K562 (cell line): ENCODE measurements at regions of chr5 and their contacts with region 1.

Region 1: GRCh38 chr5:170747851-170748250 is 35.7 kb upstream of the GABRP start:
- DNase-seq: peak; percentile 23 to 39 (median 32)
- ATAC-seq: peak; percentile 67
- H3K4me3 ChIP-seq: no peak overlapping the region
- H3K27ac ChIP-seq: no peak overlapping the region
- H3K4me1 ChIP-seq: peaks cover 0 to 9% of the 10 kb centered on the region in 2 experiments; a peak in 2 of 5 replicates
- H3K27me3 ChIP-seq: peaks cover 2 to 23% of the 10 kb centered on the region in 2 experiments; a peak in 3 of 5 replicates
- CTCF ChIP-seq: peak; percentile 34 to 57 (median 49)
- EP300 ChIP-seq: no peak
- POLR2A ChIP-seq: no peak
- RAD21 ChIP-seq: 0 out of 4 replicates have a peak, but pooled peaks of 1 of the 2 experiments have one; percentile 19

Region 2: GRCh38 chr5:170701334-170701733 is 46.5 kb before region 1 on chr5:
- CTCF ChIA-PET with region 1: no interaction called
- POLR2A ChIA-PET with region 1: no interaction called
- in situ Hi-C with region 1: no loop called
- intact Hi-C with region 1: no loop called
- DNase-seq: no peak
- ATAC-seq: no peak
- H3K4me3 ChIP-seq: no peak overlapping the region
- H3K27ac ChIP-seq: no peak overlapping the region
- H3K4me1 ChIP-seq: no peaks in the 10 kb centered on the region
- H3K27me3 ChIP-seq: no peaks in the 10 kb centered on the region
- CTCF ChIP-seq: no peak
- EP300 ChIP-seq: no peak
- POLR2A ChIP-seq: no peak
- RAD21 ChIP-seq: no peak

Region 3: DNA sequence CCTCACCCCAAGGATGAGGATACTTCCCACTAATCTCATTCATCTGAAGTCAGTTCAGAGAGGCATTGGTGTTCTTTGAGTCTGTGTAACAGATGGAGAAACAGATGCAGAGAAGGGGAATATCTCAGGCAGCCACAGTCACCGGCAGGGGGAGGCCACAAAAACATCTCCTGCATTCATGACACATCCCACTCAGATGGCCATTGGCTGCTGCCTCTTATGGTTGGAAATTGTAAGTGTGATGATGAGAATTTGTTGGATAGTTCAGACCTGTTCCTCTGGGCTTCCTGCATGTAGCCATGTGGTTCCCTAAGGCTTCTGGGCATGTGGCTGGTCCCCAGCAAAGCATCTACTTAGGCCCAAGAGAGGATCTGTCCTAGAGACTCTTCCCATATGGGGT is 10.3 kb before region 1 on chr5:
- CTCF ChIA-PET with region 1: no interaction called
- POLR2A ChIA-PET with region 1: no interaction called
- in situ Hi-C with region 1: no loop called
- intact Hi-C with region 1: no loop called
- DNase-seq: no peak
- ATAC-seq: no peak
- H3K4me3 ChIP-seq: no peak overlapping the region
- H3K27ac ChIP-seq: no peak overlapping the region
- H3K4me1 ChIP-seq: no peaks in the 10 kb centered on the region
- H3K27me3 ChIP-seq: no peaks in the 10 kb centered on the region
- CTCF ChIP-seq: no peak
- EP300 ChIP-seq: no peak
- POLR2A ChIP-seq: no peak
- RAD21 ChIP-seq: no peak

Region 4: GRCh38 chr5:170791325-170791954 is 43.6 kb after region 1 on chr5:
- CTCF ChIA-PET with region 1: no interaction called
- POLR2A ChIA-PET with region 1: no interaction called
- in situ Hi-C with region 1: no loop called
- intact Hi-C with region 1: loop called (anchors 1 kb)
- DNase-seq: peak; percentile 21 to 30 (median 26)
- ATAC-seq: peak; percentile 69; the same call in 2 of the 3 replicates
- H3K4me3 ChIP-seq: no peak overlapping the region
- H3K27ac ChIP-seq: no peak overlapping the region
- H3K4me1 ChIP-seq: no peaks in the 10 kb centered on the region
- H3K27me3 ChIP-seq: no peaks in the 10 kb centered on the region
- CTCF ChIP-seq: peak; percentile 31 to 47 (median 47); a peak in 5 of 6 replicates
- EP300 ChIP-seq: no peak
- POLR2A ChIP-seq: no peak
- RAD21 ChIP-seq: peak; percentile 49 to 56

Region 5: GRCh38 chr5:171162602-171163001 is 414.8 kb after region 1 on chr5:
- CTCF ChIA-PET with region 1: no interaction called
- POLR2A ChIA-PET with region 1: no interaction called
- in situ Hi-C with region 1: no loop called
- intact Hi-C with region 1: loop called (anchors 10 kb)
- DNase-seq: peak; percentile 8 to 30 (median 20)
- ATAC-seq: peak; percentile 95
- H3K4me3 ChIP-seq: no peak overlapping the region
- H3K27ac ChIP-seq: no peak overlapping the region
- H3K4me1 ChIP-seq: no peaks in the 10 kb centered on the region
- H3K27me3 ChIP-seq: no peaks in the 10 kb centered on the region
- CTCF ChIP-seq: peak; percentile 39 to 57 (median 44); a peak in 5 of 6 replicates
- EP300 ChIP-seq: no peak
- POLR2A ChIP-seq: no peak
- RAD21 ChIP-seq: 0 out of 4 replicates have a peak, but pooled peaks of 1 of the 2 experiments have one; percentile 10

Region 6: DNA sequence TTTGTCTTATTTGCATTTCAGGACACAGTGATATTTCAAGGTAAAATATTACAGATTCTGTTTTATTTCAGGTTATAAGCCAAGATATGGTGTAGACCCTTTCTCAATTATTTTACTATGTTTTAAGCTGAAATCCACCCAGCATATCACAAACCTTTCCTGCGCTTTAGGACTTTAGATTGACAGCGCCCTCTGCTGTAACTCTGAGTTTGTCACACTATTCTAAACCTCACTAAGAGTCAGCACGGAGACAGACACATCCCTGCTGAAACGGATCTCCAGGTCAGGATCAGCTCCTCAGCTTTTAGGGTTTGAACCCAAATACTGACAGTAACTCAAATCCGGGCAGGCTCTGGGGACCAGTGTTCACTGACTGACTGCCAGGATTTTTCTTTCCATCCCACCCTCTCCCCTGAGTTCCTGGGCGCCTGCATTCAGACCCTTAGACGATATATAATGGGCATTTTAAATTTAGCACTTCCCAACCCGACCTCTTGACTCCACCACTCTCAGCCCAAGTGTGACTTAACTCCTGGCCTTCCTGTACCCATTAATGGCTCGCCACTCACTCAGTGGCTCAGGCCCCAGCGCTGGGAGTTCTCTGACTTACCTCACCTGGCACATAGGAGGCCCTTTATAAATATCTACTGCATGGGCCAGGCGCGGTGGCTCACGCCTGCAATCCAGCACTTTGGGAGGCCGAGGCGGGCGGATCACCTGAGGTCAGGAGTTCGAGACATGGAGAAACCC is 594.7 kb after region 1 on chr5:
- CTCF ChIA-PET with region 1: no interaction called
- POLR2A ChIA-PET with region 1: no interaction called
- in situ Hi-C with region 1: loop called (anchors 10 kb)
- intact Hi-C with region 1: loop called (anchors 2 kb)
- DNase-seq: peak; percentile 43 to 71 (median 54)
- ATAC-seq: peak; percentile 99
- H3K4me3 ChIP-seq: no peak overlapping the region
- H3K27ac ChIP-seq: no peak overlapping the region
- H3K4me1 ChIP-seq: no peaks in the 10 kb centered on the region
- H3K27me3 ChIP-seq: peaks cover 9 to 13% of the 10 kb centered on the region in 2 experiments; a peak in 4 of 5 replicates
- CTCF ChIP-seq: peak; percentile 65 to 79 (median 74)
- EP300 ChIP-seq: no peak
- POLR2A ChIP-seq: no peak
- RAD21 ChIP-seq: peak; percentile 56 to 74